ENCODE measurements at regions of chr16 and their contacts with region 1.

Region 1: GRCh38 chr16:19645557-19645981 is 72.5 kb downstream of the KNOP1 start:
- DNase-seq: no peak
- ATAC-seq: peak; percentile 69

Region 2: DNA sequence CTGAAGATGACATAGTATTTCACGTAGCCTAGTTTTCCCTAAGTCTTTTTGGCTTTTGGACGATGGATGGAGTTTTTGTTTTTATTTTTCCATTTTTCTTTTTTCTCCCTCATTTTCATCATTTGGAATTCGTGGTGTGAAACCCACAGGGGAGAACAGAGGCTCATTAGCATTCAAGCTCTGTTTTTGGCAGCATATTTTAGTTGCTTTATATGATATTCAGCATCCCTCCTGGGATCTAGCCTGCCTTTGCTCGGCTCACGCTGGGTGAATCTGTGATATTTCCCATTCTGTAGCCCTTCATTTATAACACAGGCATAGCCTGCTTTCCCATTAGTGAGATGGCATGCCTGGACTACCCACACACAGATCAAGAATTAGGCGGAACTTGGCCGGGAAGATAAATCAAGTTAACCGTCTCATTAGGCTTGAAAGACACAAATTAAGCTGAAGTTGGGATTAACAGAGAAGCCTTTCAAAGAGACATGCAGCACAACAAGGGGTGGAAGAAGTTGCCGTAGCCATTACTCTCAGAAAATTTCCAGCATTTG is 380.1 kb before region 1 on chr16:
- intact Hi-C with region 1: no loop called
- DNase-seq: no peak
- ATAC-seq: no peak

Region 3: GRCh38 chr16:19696328-19696727 is 50.8 kb after region 1 on chr16:
- intact Hi-C with region 1: loop called (anchors 5 kb)
- DNase-seq: peak; percentile 76
- ATAC-seq: peak; percentile 48